PC-9 (cell line): ENCODE measurements at regions of chr16 and their contacts with region 1.

Region 1: GRCh38 chr16:636206-637080 is at the start of gene METTL26:
- DNase-seq: peak; percentile 85 to 94
- H3K4me3 ChIP-seq: peak within 1 kb of the TSS; percentile 80
- H3K27ac ChIP-seq: peak within 1 kb of the TSS; percentile 80
- H3K4me1 ChIP-seq: peaks cover 11% of the 10 kb centered on the region; the same call in 1 of the 2 replicates
- H3K27me3 ChIP-seq: no peaks in the 10 kb centered on the region
- CTCF ChIP-seq: no peak
- total RNA-seq, gene METTL26: 144 and 158 TPM in 2 replicates

Region 2: DNA sequence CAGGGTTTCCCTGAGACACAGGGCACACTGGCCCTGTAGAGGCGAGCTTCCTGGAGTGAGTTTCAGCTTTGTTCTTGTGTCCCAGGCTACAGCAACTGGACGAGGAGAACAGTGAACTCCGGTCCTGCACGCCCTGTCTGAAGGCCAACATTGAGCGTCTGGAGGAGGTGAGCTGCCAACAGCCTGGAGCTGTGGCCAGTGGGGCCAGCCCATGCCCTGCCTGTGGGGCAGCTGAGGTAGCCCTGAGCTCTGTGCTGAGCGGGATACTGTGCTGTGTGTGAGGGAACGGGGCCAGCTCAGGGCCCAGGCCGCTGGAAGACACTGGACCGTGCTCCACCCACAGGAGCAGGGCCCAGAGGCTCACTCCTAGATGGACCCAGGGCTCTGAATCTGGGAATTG is 117.6 kb before region 1 on chr16:
- CTCF ChIA-PET with region 1: no interaction called
- POLR2A ChIA-PET with region 1: interaction called, 17 read pairs
- intact Hi-C with region 1: no loop called
- DNase-seq: no peak
- H3K4me3 ChIP-seq: no peak overlapping the region
- H3K27ac ChIP-seq: no peak overlapping the region
- H3K4me1 ChIP-seq: no peaks in the 10 kb centered on the region
- H3K27me3 ChIP-seq: no peaks in the 10 kb centered on the region
- CTCF ChIP-seq: no peak